AG04449 (cell line): ENCODE measurements at regions of chr3 and their contacts with region 1.

Region 1: GRCh38 chr3:32374788-32375595 is 16.7 kb upstream of the CMTM7 start:
- DNase-seq: peak; percentile 34
- H3K4me3 ChIP-seq: no peak overlapping the region
- CTCF ChIP-seq: peak; percentile 56

Region 2: GRCh38 chr3:32245200-32245599 is 129.8 kb before region 1 on chr3:
- CTCF ChIA-PET with region 1: no interaction called
- POLR2A ChIA-PET with region 1: no interaction called
- DNase-seq: no peak
- H3K4me3 ChIP-seq: no peak overlapping the region
- CTCF ChIP-seq: no peak

Region 3: DNA sequence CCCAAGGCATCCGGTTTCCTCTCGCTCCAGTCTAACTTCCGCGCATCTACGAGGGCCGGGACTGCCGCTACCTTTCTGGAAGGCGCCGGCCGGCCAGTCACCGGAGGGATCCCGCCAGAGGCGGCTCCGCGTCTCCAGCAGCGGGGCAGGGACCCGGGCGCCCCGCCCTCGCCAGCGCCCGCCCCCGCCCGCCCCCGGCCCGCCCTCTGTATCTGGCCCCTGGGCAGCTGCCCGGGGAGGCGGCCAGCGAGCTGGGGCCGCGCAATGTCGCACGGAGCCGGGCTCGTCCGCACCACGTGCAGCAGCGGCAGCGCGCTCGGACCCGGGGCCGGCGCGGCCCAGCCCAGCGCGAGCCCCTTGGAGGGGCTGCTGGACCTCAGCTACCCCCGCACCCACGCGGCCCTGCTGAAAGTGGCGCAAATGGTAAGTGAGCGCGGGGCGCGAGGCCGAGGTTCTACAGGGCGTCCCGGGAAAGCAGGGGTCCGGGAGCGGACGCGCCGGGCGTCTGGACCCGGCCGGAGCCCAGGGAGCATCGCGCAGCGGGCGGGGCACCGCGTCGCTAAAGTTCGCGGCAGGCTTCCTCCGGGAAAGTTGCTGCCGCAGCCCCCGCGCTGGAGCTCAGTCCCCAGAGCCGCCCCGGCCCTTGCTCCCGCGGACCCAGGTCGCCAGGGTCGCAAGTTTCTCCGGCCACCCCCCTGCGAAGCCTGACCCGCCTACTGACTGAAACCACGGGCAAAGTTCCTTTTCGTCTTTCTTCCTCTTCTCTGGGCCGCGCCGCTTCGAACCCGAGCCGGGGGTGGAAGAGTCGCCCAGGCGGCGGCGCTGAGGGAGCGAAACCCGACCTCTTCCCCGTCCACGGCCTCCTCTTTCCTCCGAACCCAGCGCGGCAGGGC is 16.9 kb after region 1 on chr3 and contains the start of gene CMTM7:
- CTCF ChIA-PET with region 1: interaction called, 77 read pairs
- POLR2A ChIA-PET with region 1: no interaction called
- DNase-seq: no peak
- H3K4me3 ChIP-seq: peak within 1 kb of the TSS; percentile 74
- CTCF ChIP-seq: no peak

Region 4: DNA sequence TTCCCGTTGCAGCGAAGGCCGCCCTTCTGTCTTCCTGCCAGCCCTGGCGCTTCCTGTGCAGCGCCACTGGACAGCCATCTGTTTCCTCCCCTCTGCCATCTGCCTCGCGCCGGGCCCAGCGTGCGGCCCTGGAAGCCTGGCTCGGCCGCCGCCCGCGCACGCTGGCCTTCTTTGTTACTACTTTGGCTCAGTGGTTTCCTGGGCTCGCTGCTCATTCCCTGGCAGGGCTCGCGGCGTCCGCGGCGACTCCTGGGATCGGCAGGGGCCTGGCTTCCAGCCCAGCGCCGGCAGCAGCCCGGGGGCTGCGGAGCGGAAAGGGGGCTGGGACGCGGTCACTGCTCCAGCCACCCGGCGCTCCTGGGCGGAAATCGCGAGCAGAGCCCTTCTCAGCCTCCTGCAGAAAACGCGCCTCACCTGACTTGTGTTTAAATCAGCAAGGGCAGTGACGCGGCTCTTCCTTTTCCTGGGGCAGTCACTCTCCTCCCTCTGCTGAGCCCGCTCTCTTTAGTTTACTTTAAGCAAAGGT is 26.6 kb after region 1 on chr3:
- CTCF ChIA-PET with region 1: interaction called, 77 read pairs
- POLR2A ChIA-PET with region 1: no interaction called
- DNase-seq: no peak
- H3K4me3 ChIP-seq: peak overlapping the region; percentile 44
- CTCF ChIP-seq: no peak

Region 5: GRCh38 chr3:32414520-32415202 is 39.7 kb after region 1 on chr3:
- CTCF ChIA-PET with region 1: interaction called, 19 read pairs
- POLR2A ChIA-PET with region 1: no interaction called
- DNase-seq: no peak
- H3K4me3 ChIP-seq: no peak overlapping the region
- CTCF ChIP-seq: no peak

Region 6: GRCh38 chr3:32457971-32458471 is 83.0 kb after region 1 on chr3:
- CTCF ChIA-PET with region 1: interaction called, 22 read pairs
- POLR2A ChIA-PET with region 1: no interaction called
- DNase-seq: no peak
- H3K4me3 ChIP-seq: no peak overlapping the region
- CTCF ChIP-seq: no peak

Region 7: GRCh38 chr3:32474201-32474600 is 99.2 kb after region 1 on chr3:
- CTCF ChIA-PET with region 1: interaction called, 184 read pairs
- POLR2A ChIA-PET with region 1: no interaction called
- DNase-seq: no peak
- H3K4me3 ChIP-seq: no peak overlapping the region
- CTCF ChIP-seq: no peak

Region 8: DNA sequence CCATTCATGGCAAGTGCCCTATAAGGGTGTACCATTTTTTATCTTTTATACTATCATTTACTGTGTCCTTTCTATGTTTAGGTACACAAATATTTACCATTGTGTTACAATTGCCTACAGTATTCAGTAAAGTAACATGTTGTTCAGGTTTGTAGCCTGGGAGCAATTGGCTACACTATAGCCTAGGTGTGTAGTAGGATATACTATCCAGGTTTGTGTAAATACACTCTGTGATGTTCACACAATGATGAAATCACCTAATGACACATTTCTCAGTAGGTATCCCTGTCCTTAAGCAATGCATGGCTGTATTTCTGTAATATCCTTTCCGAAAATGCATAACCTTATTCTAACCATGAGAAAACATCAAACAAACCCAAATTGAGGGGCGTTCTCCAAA is 292.1 kb after region 1 on chr3:
- CTCF ChIA-PET with region 1: interaction called, 13 read pairs
- POLR2A ChIA-PET with region 1: no interaction called
- DNase-seq: no peak
- H3K4me3 ChIP-seq: no peak overlapping the region
- CTCF ChIP-seq: no peak